ENCODE measurements at regions of chr3 and their contacts with region 1.

Region 1: DNA sequence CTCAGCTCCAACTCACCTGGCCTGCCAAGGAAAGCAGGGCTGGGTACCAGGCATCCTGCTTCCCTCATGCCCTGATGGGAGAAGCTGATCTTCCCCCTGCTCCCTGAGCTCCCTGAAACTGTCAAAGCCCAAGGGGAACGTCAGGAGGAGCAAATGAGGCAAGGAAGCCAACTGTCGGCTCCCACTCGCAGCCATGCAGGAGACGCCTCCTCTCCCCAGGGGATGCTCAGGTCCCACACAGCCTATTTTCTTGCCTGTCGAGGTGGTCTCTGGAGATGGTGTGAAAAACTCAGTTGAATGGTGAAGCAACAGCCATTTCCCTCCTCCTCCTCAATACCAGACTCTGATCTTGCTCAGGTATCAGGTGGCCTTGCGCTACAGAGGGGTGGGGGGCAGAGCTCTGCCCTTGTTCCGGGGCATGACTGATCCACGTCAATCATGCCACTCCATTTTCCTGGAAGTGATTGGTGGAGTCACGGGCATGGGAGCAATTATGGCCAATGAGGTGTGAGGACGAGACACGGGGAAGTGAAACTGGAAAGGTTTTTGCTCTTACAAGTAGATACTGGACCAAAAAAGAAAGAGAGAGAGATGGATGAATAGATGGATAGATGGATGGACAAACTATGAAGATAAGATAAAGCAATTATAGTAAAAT is 58.2 kb downstream of the SLC6A1 start:
- DNase-seq: peak in 1 of 2 donors; percentile 23
- H3K4me3 ChIP-seq: no peak overlapping the region
- CTCF ChIP-seq: no peak
- POLR2A ChIP-seq: no peak

Region 2: GRCh38 chr3:10945683-10946287 is 105.0 kb before region 1 on chr3:
- intact Hi-C with region 1: loop called (anchors 5 kb)
- DNase-seq: peak in 1 of 2 donors; percentile 88
- H3K4me3 ChIP-seq: no peak overlapping the region
- CTCF ChIP-seq: no peak
- POLR2A ChIP-seq: no peak